ENCODE measurements at regions of chr9 and their contacts with region 1.

Region 1: DNA sequence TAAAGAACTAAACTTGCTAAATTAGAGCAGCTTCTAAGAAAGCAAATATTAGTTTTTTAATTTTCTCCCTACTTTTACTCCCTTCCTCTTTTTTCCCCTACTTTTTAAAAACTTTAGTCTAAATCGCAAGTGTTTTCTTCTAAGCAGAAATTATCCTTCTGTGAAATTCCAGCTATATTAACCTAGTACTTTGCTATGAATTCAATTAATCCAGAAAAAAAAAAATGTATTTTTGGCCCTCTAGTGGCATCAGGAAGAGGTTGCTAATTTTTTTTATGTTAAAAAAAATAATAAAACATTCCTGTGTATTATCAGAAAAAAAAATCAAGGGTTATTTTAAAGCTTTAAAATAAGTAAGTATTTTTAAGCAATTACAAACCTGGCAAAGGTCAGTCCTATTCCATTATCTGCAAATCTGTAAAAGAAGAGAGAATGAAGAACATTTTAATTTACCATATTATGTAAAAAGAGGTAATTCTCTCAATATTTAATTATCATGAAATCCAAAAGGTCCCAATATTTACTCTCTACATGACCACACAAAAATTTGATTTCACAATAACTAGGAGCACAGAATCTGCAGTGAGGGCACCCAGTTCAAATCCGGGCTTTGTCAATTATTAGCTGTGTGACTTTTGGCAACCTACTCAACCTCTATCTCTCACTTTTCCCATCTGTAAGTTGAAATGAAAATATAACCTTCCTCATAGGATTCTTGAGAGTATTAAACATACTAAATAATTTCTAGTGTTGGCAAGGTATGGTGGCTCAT is 52.0 kb downstream of the CEMIP2 start:
- DNase-seq: no peak
- H3K4me3 ChIP-seq: no peak overlapping the region
- H3K27ac ChIP-seq: no peak overlapping the region
- H3K4me1 ChIP-seq: no peaks in the 10 kb centered on the region
- H3K27me3 ChIP-seq: no peaks in the 10 kb centered on the region
- CTCF ChIP-seq: peak in 2 of 3 donors; percentile 21 to 36
- POLR2A ChIP-seq: no peak

Region 2: DNA sequence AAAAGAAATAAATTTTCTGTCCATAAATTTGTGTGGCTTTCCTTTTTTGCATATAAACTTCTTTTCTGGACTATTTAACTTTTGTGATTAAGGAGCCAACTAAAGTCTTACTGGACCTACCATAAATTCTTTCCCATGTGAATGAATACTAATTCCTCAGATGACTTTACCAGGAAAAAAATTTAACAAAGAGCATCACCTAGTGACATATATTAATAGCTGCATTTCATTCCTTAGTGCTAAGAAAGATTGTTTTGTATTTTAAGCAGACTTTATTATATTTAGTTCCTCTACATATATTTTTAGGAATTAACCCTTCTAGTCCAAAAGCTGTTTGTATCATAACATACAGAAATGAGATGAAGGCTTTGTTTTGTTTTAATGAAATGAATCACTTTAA is 259.5 kb after region 1 on chr9:
- intact Hi-C with region 1: loop called (anchors 5 kb)
- DNase-seq: no peak
- H3K4me3 ChIP-seq: no peak overlapping the region
- H3K27ac ChIP-seq: no peak overlapping the region
- H3K4me1 ChIP-seq: no peaks in the 10 kb centered on the region
- H3K27me3 ChIP-seq: no peaks in the 10 kb centered on the region
- CTCF ChIP-seq: peak in 2 of 3 donors; percentile 12 to 24
- POLR2A ChIP-seq: no peak